ENCODE measurements at regions of chr3 and their contacts with region 1.

Region 1: DNA sequence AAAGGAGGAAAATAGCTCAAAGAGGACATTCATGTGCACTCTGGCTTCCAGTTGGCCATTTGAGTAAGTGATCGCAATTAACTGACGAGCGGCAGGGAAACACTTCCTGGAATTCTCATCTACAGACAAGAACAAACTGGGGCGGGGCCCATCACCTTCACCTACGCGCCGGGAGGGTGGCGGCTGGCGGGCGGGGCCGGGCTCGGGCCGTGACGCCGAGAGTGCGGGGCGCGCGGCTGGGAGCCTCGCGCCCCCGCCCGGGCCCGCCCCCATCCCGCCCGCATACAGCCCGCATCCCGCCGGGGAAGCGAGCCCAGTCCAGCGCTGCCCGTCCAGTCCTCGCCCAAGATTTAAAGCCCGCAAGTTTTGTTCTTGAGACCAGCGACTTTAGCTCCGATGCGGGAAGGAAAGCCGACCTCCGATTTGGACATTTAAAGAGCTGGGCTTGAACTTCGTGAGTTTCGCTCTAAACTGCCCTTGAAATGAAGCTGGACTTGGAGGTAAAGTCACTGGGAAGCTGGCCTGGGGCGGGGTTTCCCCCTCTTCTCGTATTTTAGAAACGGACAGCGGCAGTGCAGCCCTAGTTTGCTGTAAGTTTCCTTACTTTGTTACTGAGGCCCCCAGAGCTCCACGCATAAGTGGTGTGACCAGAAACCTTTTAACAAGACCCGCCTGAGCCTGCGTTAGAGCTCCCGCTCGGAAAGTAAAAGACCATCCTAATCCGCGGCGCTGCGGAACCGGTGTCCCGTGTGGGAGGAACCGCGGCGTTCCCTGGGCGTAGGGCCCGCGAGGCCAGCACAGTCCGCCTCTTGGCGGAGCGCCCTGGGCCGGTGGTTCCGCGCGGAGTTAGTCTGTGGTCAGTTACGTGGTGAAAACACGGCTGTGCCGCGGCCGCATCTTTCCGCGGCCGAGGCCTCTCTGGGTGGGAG is at the start of gene B3GNT5:
- DNase-seq: peak; percentile 85
- H3K4me3 Mint-ChIP-seq: peak within 1 kb of the TSS; percentile 93
- H3K27ac Mint-ChIP-seq: no peak within 1 kb of the TSS
- H3K4me1 Mint-ChIP-seq: peaks cover 38% of the 10 kb centered on the region
- H3K27me3 Mint-ChIP-seq: no peaks in the 10 kb centered on the region
- CTCF ChIP-seq: no peak
- total RNA-seq, gene B3GNT5: 80.1 and 104 TPM in 2 replicates

Region 2: GRCh38 chr3:183038221-183038620 is 215.0 kb before region 1 on chr3:
- CTCF ChIA-PET with region 1: no interaction called
- POLR2A ChIA-PET with region 1: no interaction called
- intact Hi-C with region 1: no loop called
- DNase-seq: no peak
- H3K4me3 Mint-ChIP-seq: no peak overlapping the region
- H3K27ac Mint-ChIP-seq: no peak overlapping the region
- H3K4me1 Mint-ChIP-seq: no peaks in the 10 kb centered on the region
- H3K27me3 Mint-ChIP-seq: no peaks in the 10 kb centered on the region
- CTCF ChIP-seq: no peak

Region 3: GRCh38 chr3:183131735-183132134 is 121.5 kb before region 1 on chr3:
- CTCF ChIA-PET with region 1: no interaction called
- POLR2A ChIA-PET with region 1: no interaction called
- intact Hi-C with region 1: no loop called
- DNase-seq: peak; percentile 61
- H3K4me3 Mint-ChIP-seq: no peak overlapping the region
- H3K27ac Mint-ChIP-seq: no peak overlapping the region
- H3K4me1 Mint-ChIP-seq: no peaks in the 10 kb centered on the region
- H3K27me3 Mint-ChIP-seq: no peaks in the 10 kb centered on the region
- CTCF ChIP-seq: no peak

Region 4: GRCh38 chr3:183265834-183266417 is 12.7 kb after region 1 on chr3:
- CTCF ChIA-PET with region 1: interaction called, 9 read pairs
- POLR2A ChIA-PET with region 1: interaction called, 147 read pairs
- intact Hi-C with region 1: loop called (anchors 1 kb)
- DNase-seq: peak; percentile 96
- H3K4me3 Mint-ChIP-seq: no peak overlapping the region
- H3K27ac Mint-ChIP-seq: no peak overlapping the region
- H3K4me1 Mint-ChIP-seq: peaks cover 24% of the 10 kb centered on the region
- H3K27me3 Mint-ChIP-seq: no peaks in the 10 kb centered on the region
- CTCF ChIP-seq: no peak

Region 5: DNA sequence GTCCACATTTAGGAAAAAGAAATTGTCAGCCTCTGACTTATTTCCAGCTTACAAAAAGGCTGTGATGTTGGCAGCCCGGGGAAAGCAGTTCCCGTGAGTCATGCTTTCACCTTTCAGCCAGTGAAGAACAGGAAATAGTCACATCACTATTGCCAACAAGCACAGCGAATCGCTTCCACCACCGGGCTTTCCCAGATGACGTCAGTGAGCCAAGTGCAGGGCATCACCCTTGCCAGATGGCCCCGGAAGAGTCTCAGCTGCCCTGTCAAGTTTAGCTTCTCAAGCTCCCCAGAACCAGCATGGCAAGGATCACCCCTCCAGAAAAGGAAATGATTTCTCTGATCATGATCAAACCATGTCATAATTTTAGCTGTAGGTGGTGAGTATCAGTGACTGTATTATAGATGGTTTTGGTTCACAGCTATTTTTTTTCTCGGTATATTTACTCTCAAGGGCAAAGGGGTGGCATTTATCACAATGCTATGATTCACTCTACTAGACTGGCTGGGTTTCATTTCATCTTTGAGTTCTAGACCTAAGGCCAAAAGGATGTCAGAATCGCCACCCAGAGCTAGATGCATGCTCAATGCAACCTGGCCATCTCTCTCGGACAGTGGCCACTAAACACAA is 32.7 kb after region 1 on chr3:
- CTCF ChIA-PET with region 1: interaction called, 5 read pairs
- POLR2A ChIA-PET with region 1: interaction called, 219 read pairs
- intact Hi-C with region 1: loop called (anchors 2 kb)
- DNase-seq: peak; percentile 99
- H3K4me3 Mint-ChIP-seq: peak overlapping the region; percentile 48
- H3K27ac Mint-ChIP-seq: peak overlapping the region; percentile 91
- H3K4me1 Mint-ChIP-seq: peaks cover 31% of the 10 kb centered on the region
- H3K27me3 Mint-ChIP-seq: no peaks in the 10 kb centered on the region
- CTCF ChIP-seq: no peak

Region 6: GRCh38 chr3:183328823-183329222 is 75.6 kb after region 1 on chr3:
- CTCF ChIA-PET with region 1: no interaction called
- POLR2A ChIA-PET with region 1: interaction called, 11 read pairs
- intact Hi-C with region 1: loop called (anchors 10 kb)
- DNase-seq: peak; percentile 46
- H3K4me3 Mint-ChIP-seq: no peak overlapping the region
- H3K27ac Mint-ChIP-seq: peak overlapping the region; percentile 50
- H3K4me1 Mint-ChIP-seq: peaks cover 32% of the 10 kb centered on the region
- H3K27me3 Mint-ChIP-seq: no peaks in the 10 kb centered on the region
- CTCF ChIP-seq: no peak

Region 7: DNA sequence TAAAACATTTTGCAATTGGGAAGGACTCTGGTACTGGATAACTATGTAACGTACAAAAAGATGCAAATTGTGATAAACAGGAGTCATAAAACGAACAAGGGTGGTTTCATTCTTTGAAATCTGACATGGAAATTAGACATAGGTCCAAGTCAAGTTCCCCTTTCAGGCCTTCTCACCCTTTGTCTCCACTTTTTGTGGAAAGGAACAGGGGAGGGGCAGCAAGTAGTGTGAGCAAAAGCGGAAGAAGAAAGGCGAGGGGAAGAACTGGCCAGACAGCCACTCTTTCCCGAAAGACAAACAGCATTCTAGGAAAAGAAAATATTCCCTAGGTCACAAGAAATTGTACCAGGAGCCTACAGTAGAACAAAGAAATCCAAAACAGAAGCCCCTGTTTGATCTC is 122.5 kb after region 1 on chr3:
- CTCF ChIA-PET with region 1: interaction called, 4 read pairs
- POLR2A ChIA-PET with region 1: interaction called, 82 read pairs
- intact Hi-C with region 1: loop called (anchors 1 kb)
- DNase-seq: no peak
- H3K4me3 Mint-ChIP-seq: no peak overlapping the region
- H3K27ac Mint-ChIP-seq: no peak overlapping the region
- H3K4me1 Mint-ChIP-seq: peaks cover 29% of the 10 kb centered on the region
- H3K27me3 Mint-ChIP-seq: no peaks in the 10 kb centered on the region
- CTCF ChIP-seq: no peak

Measured in MCF 10A (cell line).